ENCODE measurements at regions of chr3 and their contacts with region 1.

Region 1: DNA sequence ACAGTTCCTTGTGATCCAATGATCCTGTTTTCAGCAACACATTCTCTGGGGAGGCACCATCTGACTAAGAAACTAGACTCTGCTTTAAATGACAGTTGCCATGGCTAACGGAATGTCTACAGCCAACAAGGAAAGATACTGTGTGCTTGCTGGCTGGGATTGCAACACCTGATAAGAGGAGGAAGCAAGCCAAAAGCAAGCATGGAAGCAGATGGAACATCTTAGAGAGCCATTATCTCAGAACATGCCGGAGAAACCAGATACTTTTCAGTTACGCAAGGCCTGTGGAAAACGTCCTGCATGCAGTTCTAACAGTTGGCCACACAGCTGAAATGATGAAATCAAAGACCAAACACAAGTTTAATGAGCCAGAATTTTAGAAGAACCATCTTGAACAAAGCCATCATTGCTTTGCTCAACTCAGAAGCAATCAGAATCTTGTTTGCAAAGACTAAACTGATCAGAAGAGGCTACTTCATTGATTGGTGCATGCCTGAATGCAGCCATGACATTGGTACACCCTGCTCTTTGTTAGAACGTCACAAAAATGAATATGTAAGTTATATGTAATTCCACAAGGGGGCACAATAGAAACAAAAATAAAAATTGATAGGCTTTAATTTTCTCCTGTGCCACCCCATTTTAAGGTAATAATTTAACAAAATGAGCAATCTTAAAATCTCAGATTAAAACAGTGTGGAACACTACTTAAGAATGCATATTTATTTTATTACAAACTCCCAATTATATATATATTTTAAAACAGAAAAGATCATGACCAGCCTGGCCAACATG is 50.8 kb downstream of the GXYLT2 start:
- DNase-seq: no peak

Region 2: DNA sequence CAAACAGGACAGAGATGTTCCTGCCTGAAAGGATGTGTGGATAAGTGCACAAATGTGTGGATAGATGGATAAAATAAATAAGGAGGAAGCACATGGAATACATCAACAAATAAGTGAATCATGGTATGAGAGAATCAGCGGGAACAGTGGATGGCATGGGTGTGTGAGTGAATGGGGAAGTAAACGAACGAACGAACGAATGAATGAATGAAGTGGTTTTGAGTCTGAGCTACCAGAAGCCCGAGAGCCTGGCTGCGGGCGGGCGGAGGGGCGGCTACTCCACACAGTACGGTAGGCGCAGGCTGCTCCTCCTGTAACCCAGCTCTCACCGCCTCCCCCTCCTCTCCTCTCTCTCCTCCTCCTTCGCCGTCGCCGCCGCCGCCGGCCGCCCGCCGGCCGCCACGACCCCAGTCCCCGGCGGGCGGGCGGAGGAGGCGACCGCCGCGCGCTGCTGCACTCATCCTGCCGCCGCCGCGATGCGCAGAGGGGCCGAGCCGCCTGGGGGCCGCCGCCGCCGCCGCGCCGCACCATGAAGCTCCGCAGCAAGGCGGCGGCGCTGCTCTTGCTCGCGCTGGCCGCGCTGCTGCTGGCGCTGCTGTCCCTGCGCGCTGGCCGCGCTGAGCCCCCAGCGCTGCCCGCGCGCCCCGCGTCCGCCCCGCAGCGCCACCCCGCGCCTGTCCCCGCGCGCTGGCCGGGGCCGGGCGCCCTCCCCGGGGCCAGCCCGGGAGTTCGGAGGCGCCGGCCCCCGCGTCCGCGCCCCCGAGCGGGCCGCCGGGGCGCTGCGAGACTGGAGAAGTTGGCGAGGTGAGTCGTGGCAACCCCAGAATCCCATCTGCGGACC is 50.7 kb before region 1 on chr3 and contains the start of gene GXYLT2:
- intact Hi-C with region 1: loop called (anchors 5 kb)
- DNase-seq: peak; percentile 82
- total RNA-seq, gene GXYLT2: 14.6 TPM

Region 3: DNA sequence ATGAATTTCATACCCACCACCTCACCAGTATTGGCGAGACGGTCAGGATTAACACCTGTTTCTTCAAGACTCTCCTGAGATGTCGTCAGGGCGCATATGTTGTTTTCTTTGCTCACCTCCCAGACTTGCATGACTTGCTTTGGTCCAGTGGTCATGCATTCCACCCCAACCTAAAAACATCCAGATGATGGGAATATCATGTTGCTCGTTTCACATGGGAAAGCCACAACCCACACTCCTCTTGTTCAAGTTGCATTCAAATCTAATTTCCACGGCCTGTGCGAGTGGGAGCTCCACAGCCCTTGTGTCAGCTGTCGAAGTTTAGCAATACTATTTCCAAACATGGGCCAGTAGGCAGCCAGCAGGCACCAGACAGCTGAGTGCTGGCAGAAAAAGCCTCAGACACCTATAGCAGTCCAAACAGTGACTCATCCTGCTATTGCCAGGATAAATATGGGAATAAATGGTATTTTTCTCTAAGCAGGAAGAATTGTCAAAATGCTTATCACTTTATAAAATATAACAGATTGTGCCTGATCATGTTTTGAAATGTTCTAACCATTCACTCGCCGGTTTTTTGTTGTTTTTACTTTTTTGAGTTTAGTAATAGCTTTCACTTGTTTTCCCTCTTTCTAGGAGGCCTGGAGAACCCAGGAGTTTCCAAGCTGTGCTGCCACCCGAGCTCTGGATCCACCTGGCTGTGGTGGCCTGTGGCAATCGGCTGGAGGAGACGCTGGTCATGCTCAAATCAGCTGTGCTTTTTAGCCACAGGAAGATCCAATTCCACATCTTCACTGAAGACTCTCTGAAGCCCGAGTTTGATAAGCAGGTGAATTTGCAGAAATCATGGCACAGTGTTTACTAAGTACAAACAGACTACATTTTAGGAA is 30.7 kb before region 1 on chr3:
- intact Hi-C with region 1: loop called (anchors 1 kb)
- DNase-seq: no peak

Region 4: DNA sequence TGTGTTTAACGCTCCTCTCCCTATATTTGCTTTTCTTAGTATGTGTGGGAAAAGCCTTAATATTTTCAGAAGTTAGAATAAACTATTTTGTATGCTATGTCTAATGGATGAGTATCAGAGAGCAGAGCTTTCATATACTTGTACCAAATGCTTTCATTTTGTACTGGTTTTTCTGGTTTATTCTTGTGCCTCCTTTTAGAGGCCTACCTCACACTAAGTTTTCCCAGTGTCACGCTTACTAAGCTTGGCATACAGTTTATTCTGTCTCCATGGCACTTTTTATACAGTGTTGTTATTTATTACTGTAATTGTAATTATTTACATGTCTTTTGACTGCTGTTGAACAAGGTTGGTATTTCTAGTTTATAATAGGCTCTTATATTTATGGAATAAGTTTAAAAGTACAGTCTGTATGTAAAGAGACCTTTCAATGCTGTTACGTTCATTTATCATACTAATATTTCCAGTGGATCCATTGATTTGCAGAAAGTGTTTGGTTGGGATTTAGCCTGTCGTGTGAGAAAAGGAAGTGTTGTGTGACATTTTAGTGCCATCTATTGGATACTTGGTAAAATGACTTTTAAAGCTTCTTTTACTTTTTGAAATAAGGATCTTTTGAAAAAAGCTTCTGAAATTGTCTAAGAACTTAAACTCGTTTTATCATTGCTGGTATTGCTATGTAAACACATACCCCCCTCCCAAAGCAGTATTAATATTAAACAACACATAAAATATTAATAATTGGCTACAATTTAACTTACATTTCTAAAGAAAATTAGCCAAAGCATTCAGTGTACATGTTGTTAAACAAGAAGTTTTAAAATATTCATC is 117.6 kb after region 1 on chr3:
- intact Hi-C with region 1: loop called (anchors 1 kb)
- DNase-seq: no peak

Region 5: GRCh38 chr3:73086071-73086494 is 147.4 kb after region 1 on chr3:
- intact Hi-C with region 1: loop called (anchors 2 kb)
- DNase-seq: peak; percentile 61

Measured in cardiac septum (tissue), 1 donor.